ENCODE measurements at regions of chr9 and their contacts with region 1.

Region 1: GRCh38 chr9:69919461-69920061 is 98.9 kb downstream of the CFAP95 start:
- DNase-seq: peak; percentile 13
- ATAC-seq: peak; percentile 84
- H3K4me3 ChIP-seq: no peak overlapping the region
- H3K27ac ChIP-seq: no peak overlapping the region
- H3K4me1 ChIP-seq: no peaks in the 10 kb centered on the region
- H3K27me3 ChIP-seq: no peaks in the 10 kb centered on the region
- CTCF ChIP-seq: peak; percentile 64; the same call in 1 of the 2 replicates

Region 2: GRCh38 chr9:69421908-69422801 is 497.4 kb before region 1 on chr9:
- CTCF ChIA-PET with region 1: no interaction called
- POLR2A ChIA-PET with region 1: no interaction called
- in situ Hi-C with region 1: no loop called
- intact Hi-C with region 1: loop called (anchors 5 kb)
- DNase-seq: peak; percentile 22
- ATAC-seq: peak; percentile 88
- H3K4me3 ChIP-seq: no peak overlapping the region
- H3K27ac ChIP-seq: no peak overlapping the region
- H3K4me1 ChIP-seq: no peaks in the 10 kb centered on the region
- H3K27me3 ChIP-seq: no peaks in the 10 kb centered on the region
- CTCF ChIP-seq: peak; percentile 73

Region 3: DNA sequence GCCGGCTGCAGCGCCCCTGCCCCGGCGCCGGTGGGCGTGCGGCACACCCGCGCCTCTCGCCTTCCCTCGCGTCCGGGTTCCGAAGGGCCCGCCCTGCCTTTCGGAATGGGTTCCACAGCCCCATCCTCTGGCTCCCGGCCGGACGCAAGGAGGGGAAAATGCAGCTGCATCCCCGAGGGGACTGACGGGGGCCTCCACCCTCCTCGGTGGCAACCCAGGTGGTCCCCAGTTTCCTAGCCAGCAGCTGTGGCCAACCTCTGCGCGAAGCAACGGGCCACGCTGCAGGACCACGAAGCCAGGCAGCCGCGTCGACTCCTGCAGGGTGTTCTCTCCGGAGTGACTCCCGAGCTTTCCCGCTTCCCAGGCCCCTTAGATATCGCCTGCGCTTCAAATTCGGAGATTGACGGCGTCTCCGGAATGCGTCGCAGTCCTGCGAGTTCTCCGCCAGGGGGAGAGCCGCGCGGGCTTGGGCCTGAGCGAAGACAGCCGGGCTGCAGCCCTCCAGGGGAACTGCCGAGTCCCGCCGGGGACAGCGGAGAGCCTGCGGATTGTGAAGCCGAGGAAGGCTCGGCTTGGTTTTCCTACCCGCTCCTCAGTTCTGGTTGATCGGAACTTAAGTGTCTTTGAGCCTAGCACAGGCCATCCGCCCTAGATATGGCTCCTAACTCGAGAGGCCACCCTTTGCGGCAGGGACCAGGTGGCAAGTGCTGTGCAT is 246.8 kb before region 1 on chr9:
- CTCF ChIA-PET with region 1: no interaction called
- POLR2A ChIA-PET with region 1: no interaction called
- in situ Hi-C with region 1: no loop called
- intact Hi-C with region 1: loop called (anchors 5 kb)
- DNase-seq: peak; percentile 10
- ATAC-seq: peak; percentile 96
- H3K4me3 ChIP-seq: peak overlapping the region; percentile 43 to 44
- H3K27ac ChIP-seq: no peak overlapping the region
- H3K4me1 ChIP-seq: no peaks in the 10 kb centered on the region
- H3K27me3 ChIP-seq: peaks cover 5% of the 10 kb centered on the region; the same call in 1 of the 2 replicates
- CTCF ChIP-seq: peak; percentile 84

Measured in Panc1 (cell line).